ENCODE measurements at regions of chr7 and their contacts with region 1.

Region 1: GRCh38 chr7:117127585-117128168 is 174.4 kb downstream of the ST7 start:
- DNase-seq: peak; percentile 65
- ATAC-seq: peak; percentile 70
- H3K4me3 Mint-ChIP-seq: no peak overlapping the region
- H3K27ac Mint-ChIP-seq: no peak overlapping the region
- H3K4me1 Mint-ChIP-seq: peaks cover 5% of the 10 kb centered on the region
- H3K27me3 Mint-ChIP-seq: no peaks in the 10 kb centered on the region

Region 2: GRCh38 chr7:116636997-116637396 is 490.7 kb before region 1 on chr7:
- CTCF ChIA-PET with region 1: no interaction called
- POLR2A ChIA-PET with region 1: no interaction called
- DNase-seq: no peak
- ATAC-seq: no peak
- H3K4me3 Mint-ChIP-seq: no peak overlapping the region
- H3K27ac Mint-ChIP-seq: no peak overlapping the region
- H3K4me1 Mint-ChIP-seq: no peaks in the 10 kb centered on the region
- H3K27me3 Mint-ChIP-seq: no peaks in the 10 kb centered on the region

Region 3: DNA sequence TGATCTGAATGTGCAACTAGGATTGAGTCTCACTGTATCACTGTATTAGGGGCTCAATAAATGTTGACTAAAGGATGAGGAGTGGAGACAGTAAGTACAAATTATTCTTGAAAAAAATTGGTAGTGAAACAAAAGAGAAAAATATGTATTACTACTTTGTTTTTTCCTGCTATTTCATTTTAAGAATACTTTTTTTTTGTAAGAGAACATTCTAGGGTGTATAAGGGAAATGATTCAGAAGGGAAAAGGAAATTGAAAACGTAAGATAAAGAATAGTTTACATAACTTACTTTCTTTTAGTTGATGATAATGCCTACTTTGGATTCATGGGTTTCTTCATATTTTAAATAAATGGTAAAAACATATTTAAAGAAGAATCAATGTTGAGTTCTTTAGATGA is 255.7 kb before region 1 on chr7:
- CTCF ChIA-PET with region 1: no interaction called
- POLR2A ChIA-PET with region 1: no interaction called
- DNase-seq: no peak
- ATAC-seq: no peak
- H3K4me3 Mint-ChIP-seq: no peak overlapping the region
- H3K27ac Mint-ChIP-seq: no peak overlapping the region
- H3K4me1 Mint-ChIP-seq: peaks cover 52% of the 10 kb centered on the region
- H3K27me3 Mint-ChIP-seq: no peaks in the 10 kb centered on the region

Region 4: GRCh38 chr7:116929914-116930913 is 197.5 kb before region 1 on chr7:
- CTCF ChIA-PET with region 1: interaction called, 118 read pairs
- POLR2A ChIA-PET with region 1: no interaction called
- DNase-seq: peak; percentile 81
- ATAC-seq: peak; percentile 91
- H3K4me3 Mint-ChIP-seq: no peak overlapping the region
- H3K27ac Mint-ChIP-seq: no peak overlapping the region
- H3K4me1 Mint-ChIP-seq: peaks cover 7% of the 10 kb centered on the region
- H3K27me3 Mint-ChIP-seq: peaks cover 24% of the 10 kb centered on the region

Region 5: DNA sequence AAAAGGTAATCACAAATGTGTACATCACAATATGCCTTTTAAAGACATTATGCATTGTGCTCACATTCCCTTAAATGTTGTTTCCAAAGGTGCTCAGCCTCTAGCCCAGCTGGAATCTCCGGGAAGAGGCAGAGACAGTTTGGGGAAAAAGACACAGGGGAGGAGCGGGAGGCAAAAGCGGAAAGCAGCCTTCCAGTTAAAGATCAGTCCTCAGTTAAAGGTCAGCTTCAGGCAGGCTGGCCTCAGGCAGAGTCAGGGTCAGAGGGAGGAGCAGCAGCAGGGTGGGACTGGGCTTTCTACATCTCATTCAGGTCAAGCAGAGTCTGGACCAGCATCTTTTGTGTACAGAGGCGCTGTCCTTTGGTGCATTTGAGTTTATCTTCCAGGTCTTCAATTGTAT is 155.8 kb before region 1 on chr7:
- CTCF ChIA-PET with region 1: interaction called, 14 read pairs
- POLR2A ChIA-PET with region 1: no interaction called
- DNase-seq: no peak
- ATAC-seq: no peak
- H3K4me3 Mint-ChIP-seq: no peak overlapping the region
- H3K27ac Mint-ChIP-seq: no peak overlapping the region
- H3K4me1 Mint-ChIP-seq: peaks cover 6% of the 10 kb centered on the region
- H3K27me3 Mint-ChIP-seq: peaks cover 3% of the 10 kb centered on the region

Region 6: GRCh38 chr7:116984917-116985316 is 142.8 kb before region 1 on chr7:
- CTCF ChIA-PET with region 1: interaction called, 170 read pairs
- POLR2A ChIA-PET with region 1: no interaction called
- DNase-seq: no peak
- ATAC-seq: peak; percentile 55
- H3K4me3 Mint-ChIP-seq: no peak overlapping the region
- H3K27ac Mint-ChIP-seq: no peak overlapping the region
- H3K4me1 Mint-ChIP-seq: no peaks in the 10 kb centered on the region
- H3K27me3 Mint-ChIP-seq: no peaks in the 10 kb centered on the region

Region 7: GRCh38 chr7:117008883-117009531 is 118.7 kb before region 1 on chr7:
- CTCF ChIA-PET with region 1: interaction called, 36 read pairs
- POLR2A ChIA-PET with region 1: no interaction called
- DNase-seq: peak; percentile 80
- ATAC-seq: peak; percentile 81
- H3K4me3 Mint-ChIP-seq: peak overlapping the region; percentile 48
- H3K27ac Mint-ChIP-seq: peak overlapping the region; percentile 78
- H3K4me1 Mint-ChIP-seq: peaks cover 58% of the 10 kb centered on the region
- H3K27me3 Mint-ChIP-seq: peaks cover 2% of the 10 kb centered on the region

Region 8: GRCh38 chr7:117014673-117015133 is 113.0 kb before region 1 on chr7:
- CTCF ChIA-PET with region 1: interaction called, 36 read pairs
- POLR2A ChIA-PET with region 1: no interaction called
- DNase-seq: peak; percentile 30
- ATAC-seq: peak; percentile 50
- H3K4me3 Mint-ChIP-seq: no peak overlapping the region
- H3K27ac Mint-ChIP-seq: no peak overlapping the region
- H3K4me1 Mint-ChIP-seq: peaks cover 49% of the 10 kb centered on the region
- H3K27me3 Mint-ChIP-seq: peaks cover 2% of the 10 kb centered on the region

Region 9: DNA sequence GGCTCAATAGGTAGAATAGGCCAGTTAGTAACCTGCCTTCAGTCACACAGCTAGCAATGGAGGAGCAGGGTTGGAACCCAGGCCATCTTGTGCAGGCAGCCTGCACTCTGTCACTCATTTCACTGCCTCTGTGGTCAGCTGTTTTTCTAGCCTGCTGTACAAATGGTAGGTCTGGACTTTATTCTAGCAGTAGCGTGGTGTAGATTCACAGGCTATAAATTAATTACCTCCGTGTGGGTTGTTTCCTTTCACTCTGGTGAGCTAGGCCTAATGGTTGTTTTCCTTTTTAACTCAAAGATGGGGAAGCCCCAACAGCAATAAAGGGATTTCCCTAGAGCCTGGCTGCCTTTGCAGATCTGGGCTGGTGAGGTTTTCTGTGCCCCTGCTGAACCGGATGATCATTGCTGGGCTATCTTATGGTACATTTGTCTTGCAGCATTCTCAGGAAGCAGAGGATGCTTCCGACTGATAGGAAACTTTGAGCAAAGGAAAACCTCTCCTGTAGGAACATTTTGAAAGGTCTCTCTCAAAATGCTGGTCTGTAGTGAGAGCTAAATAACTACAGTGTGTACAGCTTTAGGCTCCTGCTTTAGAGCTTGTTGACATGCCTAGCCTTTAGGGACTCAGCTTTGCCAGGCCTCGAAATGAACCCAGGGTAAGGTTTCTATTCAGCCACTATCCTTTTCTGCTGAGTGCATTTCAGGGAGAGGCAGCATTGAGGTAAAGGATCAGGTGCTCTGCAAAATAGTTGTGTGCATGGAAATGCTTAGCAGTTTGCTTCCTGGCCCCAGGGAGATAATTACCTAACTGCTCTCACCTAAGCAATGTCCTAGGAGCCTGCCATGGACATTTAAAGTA is 17.0 kb before region 1 on chr7:
- CTCF ChIA-PET with region 1: interaction called, 22 read pairs
- POLR2A ChIA-PET with region 1: no interaction called
- DNase-seq: peak; percentile 54
- ATAC-seq: peak; percentile 93
- H3K4me3 Mint-ChIP-seq: peak overlapping the region; percentile 16
- H3K27ac Mint-ChIP-seq: peak overlapping the region; percentile 36
- H3K4me1 Mint-ChIP-seq: peaks cover 14% of the 10 kb centered on the region
- H3K27me3 Mint-ChIP-seq: peaks cover 5% of the 10 kb centered on the region

Measured in activated CD8-positive, alpha-beta T cell treated with anti-CD3 and anti-CD28 coated beads, Interleukin-2, amount 10 ng/mL, durations not matched to agents 7 days and 5 days (primary cell).